SK-N-SH (cell line): ENCODE measurements at regions of chr11 and their contacts with region 1.

Region 1: DNA sequence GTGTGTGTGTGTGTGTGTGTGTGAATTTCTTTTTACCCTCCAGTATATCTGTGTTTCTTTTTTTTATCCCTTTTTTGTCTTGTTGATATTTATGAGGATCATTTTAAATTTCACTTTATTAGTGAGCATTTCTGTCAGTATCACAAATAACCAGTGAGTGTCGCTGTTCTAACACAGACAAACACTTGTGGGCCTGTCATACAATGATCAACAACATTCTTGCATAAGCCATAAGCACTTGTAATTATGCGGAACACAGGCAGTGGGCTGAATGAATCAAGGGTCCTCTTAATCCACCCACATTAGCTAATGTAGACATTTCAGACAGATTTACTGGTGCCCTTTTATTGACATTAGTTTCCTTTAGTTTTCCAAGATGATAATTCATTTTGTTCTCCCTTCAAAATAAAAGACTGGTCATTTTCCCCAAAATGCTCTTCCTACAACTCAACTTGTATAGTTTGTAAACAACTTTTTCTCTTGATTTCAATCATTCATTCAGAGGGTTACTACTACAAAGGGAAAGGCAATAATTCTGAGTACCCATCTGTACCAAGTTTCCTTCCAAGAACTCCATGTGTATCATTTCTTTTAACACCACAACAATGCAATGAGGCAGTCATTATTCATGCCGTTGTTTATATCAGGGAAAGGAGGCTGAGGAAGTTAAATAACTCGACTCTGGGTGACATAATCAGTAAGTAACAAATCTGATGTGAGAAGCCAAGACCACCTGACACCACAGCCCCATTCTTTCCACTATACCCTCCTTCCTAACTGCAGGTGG is 34.5 kb upstream of the ANO3 start:
- DNase-seq: peak; percentile 49
- H3K4me3 ChIP-seq: no peak overlapping the region
- H3K27ac ChIP-seq: no peak overlapping the region
- H3K4me1 ChIP-seq: no peaks in the 10 kb centered on the region
- H3K27me3 ChIP-seq: no peaks in the 10 kb centered on the region
- CTCF ChIP-seq: peak; percentile 88
- EP300 ChIP-seq: no peak
- RAD21 ChIP-seq: peak; percentile 94

Region 2: DNA sequence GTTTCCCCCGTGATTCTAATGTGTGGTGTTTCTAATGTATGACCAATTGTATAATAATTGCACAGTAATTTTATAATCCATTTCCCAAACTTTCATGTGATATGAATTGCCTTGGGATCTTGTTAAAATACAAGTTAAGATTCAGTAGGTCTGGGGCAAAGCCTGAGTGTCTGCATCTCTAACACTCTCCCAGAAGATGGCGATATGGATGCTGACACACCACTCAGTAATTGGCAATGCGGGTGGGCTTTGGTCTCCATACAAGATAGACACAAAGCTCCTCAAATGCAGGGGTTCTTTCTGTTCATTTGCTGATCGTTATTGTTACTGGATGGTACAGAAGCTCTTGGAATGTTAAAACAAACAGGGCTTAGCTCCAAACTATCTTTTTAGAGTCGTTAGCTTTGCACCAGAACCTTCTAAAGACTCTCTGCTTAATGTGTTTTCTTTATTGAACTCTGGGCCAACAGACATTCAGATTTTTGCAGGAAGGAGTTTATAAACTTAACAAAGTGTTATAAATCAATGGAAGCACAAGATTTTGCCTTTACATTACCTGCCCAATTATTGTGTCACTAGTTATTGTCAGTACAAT is 10.8 kb before region 1 on chr11:
- CTCF ChIA-PET with region 1: interaction called, 11 read pairs
- POLR2A ChIA-PET with region 1: no interaction called
- DNase-seq: peak; percentile 47
- H3K4me3 ChIP-seq: no peak overlapping the region
- H3K27ac ChIP-seq: no peak overlapping the region
- H3K4me1 ChIP-seq: peaks cover 0 to 3% of the 10 kb centered on the region in 2 experiments; a peak in 1 of 4 replicates
- H3K27me3 ChIP-seq: no peaks in the 10 kb centered on the region
- CTCF ChIP-seq: peak; percentile 56
- EP300 ChIP-seq: no peak
- RAD21 ChIP-seq: peak; percentile 55

Region 3: GRCh38 chr11:26551186-26551801 is 253.9 kb after region 1 on chr11:
- CTCF ChIA-PET with region 1: interaction called, 28 read pairs
- POLR2A ChIA-PET with region 1: no interaction called
- DNase-seq: no peak
- H3K4me3 ChIP-seq: no peak overlapping the region
- H3K27ac ChIP-seq: no peak overlapping the region
- H3K4me1 ChIP-seq: 0 out of 4 replicates have a peak, but pooled peaks cover 0 to 2% of the 10 kb centered on the region in 2 experiments
- H3K27me3 ChIP-seq: no peaks in the 10 kb centered on the region
- CTCF ChIP-seq: peak; percentile 73
- EP300 ChIP-seq: no peak
- RAD21 ChIP-seq: peak; percentile 74

Region 4: GRCh38 chr11:26649884-26650283 is 352.5 kb after region 1 on chr11:
- CTCF ChIA-PET with region 1: interaction called, 29 read pairs
- POLR2A ChIA-PET with region 1: no interaction called
- DNase-seq: peak; percentile 41
- H3K4me3 ChIP-seq: no peak overlapping the region
- H3K27ac ChIP-seq: no peak overlapping the region
- H3K4me1 ChIP-seq: no peaks in the 10 kb centered on the region
- H3K27me3 ChIP-seq: no peaks in the 10 kb centered on the region
- CTCF ChIP-seq: peak; percentile 84
- EP300 ChIP-seq: no peak
- RAD21 ChIP-seq: peak; percentile 84